ENCODE measurements at regions of chr17 and their contacts with region 1.

Region 1: GRCh38 chr17:50478391-50479381 is at the start of gene RSAD1:
- DNase-seq: peak; percentile 86 to 95 (median 92)
- ATAC-seq: peak; percentile 80 to 85 (median 84)
- H3K4me3 ChIP-seq: peak within 1 kb of the TSS; percentile 58 to 91 (median 66)
- H3K27ac ChIP-seq: peak within 1 kb of the TSS; percentile 80 to 88 (median 84)
- H3K4me1 ChIP-seq: peaks cover 9 to 25% (median 16%) of the 10 kb centered on the region in 3 donors
- H3K27me3 ChIP-seq: no peaks in the 10 kb centered on the region
- CTCF ChIP-seq: peak; percentile 87 to 94 (median 91)
- total RNA-seq, gene RSAD1: 20.1 to 35.7 (median 30.1) TPM

Region 2: DNA sequence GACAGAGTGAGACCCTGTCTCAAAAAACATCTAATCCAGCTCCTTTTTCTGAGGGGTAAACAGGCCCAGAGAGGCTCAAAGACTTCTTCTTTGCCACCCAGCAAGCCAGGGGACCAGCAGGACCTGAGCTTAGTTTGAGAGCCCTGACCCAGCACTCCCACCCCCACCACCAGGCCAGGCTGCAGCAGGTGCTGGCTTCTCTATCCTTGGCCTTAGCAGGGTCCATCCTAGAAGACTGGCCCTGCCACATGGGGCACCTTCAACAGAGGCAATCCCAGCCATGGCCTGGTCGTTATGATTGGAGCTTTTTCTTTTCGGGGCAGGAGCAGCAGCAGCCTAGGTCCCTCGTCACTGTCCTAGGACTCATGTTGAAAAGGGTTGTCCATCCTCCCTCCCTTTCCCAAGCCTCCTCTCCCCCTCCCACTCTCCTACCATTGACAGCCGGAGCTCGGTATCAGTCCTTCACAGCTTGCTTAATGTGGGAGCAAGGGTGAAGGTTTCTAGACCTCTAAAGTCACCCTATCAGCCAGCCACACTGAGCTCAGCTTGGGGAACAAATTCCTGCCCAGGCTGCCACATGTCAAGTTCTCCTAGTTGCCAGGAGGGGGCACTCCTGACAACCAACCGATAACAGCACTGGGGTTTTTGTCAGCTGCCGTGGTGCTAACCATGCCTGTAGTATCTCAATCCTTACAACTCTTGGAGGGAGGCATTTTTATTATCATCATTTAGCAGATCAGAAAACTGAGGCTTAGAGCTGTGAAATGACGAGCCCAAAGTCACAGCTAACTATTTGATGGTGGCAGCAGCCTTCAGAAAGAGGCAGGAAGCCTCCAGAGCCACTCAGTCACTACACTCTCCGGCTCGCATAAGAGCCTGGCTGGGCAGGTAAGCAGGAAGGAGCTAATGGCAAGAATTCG is 116.9 kb before region 1 on chr17:
- intact Hi-C with region 1: loop called in 2 of 3 experiments (anchors 5 to 10 kb)
- DNase-seq: peak in 3 of 6 donors; percentile 52 to 71 (median 57)
- ATAC-seq: peak; percentile 82 to 92 (median 89)
- H3K4me3 ChIP-seq: no peak overlapping the region
- H3K27ac ChIP-seq: peak overlapping the region in 1 of 4 donors; percentile 15
- H3K4me1 ChIP-seq: peaks cover 0 to 7% (median 0%) of the 10 kb centered on the region in 3 donors
- H3K27me3 ChIP-seq: no peaks in the 10 kb centered on the region
- CTCF ChIP-seq: peak; percentile 61 to 72 (median 66)

Region 3: GRCh38 chr17:50397111-50397918 is 81.4 kb before region 1 on chr17 and contains the start of gene LRRC59:
- intact Hi-C with region 1: no loop called
- DNase-seq: peak; percentile 83 to 98 (median 92)
- ATAC-seq: peak; percentile 78 to 97 (median 90)
- H3K4me3 ChIP-seq: peak within 1 kb of the TSS; percentile 40 to 94 (median 81)
- H3K27ac ChIP-seq: peak within 1 kb of the TSS; percentile 81 to 97 (median 94)
- H3K4me1 ChIP-seq: peaks cover 9 to 16% (median 13%) of the 10 kb centered on the region in 3 donors
- H3K27me3 ChIP-seq: no peaks in the 10 kb centered on the region
- CTCF ChIP-seq: peak; percentile 97 to 99 (median 98)
- total RNA-seq, gene LRRC59: 66.7 to 114 (median 74.2) TPM

Region 4: GRCh38 chr17:50539762-50540559 is 61.3 kb after region 1 on chr17:
- intact Hi-C with region 1: loop called in 2 of 3 experiments (anchors 5 to 10 kb)
- DNase-seq: peak in 4 of 6 donors; percentile 22 to 79 (median 51)
- ATAC-seq: no peak
- H3K4me3 ChIP-seq: no peak overlapping the region
- H3K27ac ChIP-seq: no peak overlapping the region
- H3K4me1 ChIP-seq: peaks cover 18 to 34% (median 24%) of the 10 kb centered on the region in 3 donors
- H3K27me3 ChIP-seq: no peaks in the 10 kb centered on the region
- CTCF ChIP-seq: no peak

Region 5: GRCh38 chr17:50575581-50576210 is 97.0 kb after region 1 on chr17:
- intact Hi-C with region 1: no loop called
- DNase-seq: no peak
- ATAC-seq: peak in 2 of 4 donors; percentile 22 to 33
- H3K4me3 ChIP-seq: no peak overlapping the region
- H3K27ac ChIP-seq: no peak overlapping the region
- H3K4me1 ChIP-seq: no peaks in the 10 kb centered on the region
- H3K27me3 ChIP-seq: no peaks in the 10 kb centered on the region
- CTCF ChIP-seq: no peak

Region 6: DNA sequence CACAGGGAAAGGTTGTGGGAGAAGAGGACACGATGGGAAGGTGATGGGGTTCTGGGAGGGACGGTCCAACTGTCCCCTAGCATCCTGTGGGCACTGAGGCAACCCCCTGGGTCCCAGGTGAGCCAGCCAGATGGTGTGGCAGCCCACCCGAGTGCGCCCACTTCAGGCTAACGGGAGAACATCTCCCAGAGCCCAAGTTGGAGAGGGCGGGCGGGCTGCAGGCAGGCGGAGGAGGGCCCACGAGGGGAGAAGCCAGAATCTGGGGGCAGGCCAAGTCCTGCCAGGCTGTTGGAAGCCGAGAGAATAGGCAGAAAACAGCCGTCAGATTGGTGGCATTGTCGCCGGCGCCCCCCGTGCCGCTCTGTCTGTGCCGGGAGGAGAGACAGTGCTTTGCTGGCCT is 142.2 kb after region 1 on chr17:
- intact Hi-C with region 1: loop called in 2 of 3 experiments (anchors 5 to 10 kb)
- DNase-seq: no peak
- ATAC-seq: no peak
- H3K4me3 ChIP-seq: no peak overlapping the region
- H3K27ac ChIP-seq: no peak overlapping the region
- H3K4me1 ChIP-seq: no peaks in the 10 kb centered on the region
- H3K27me3 ChIP-seq: no peaks in the 10 kb centered on the region
- CTCF ChIP-seq: no peak

Region 7: DNA sequence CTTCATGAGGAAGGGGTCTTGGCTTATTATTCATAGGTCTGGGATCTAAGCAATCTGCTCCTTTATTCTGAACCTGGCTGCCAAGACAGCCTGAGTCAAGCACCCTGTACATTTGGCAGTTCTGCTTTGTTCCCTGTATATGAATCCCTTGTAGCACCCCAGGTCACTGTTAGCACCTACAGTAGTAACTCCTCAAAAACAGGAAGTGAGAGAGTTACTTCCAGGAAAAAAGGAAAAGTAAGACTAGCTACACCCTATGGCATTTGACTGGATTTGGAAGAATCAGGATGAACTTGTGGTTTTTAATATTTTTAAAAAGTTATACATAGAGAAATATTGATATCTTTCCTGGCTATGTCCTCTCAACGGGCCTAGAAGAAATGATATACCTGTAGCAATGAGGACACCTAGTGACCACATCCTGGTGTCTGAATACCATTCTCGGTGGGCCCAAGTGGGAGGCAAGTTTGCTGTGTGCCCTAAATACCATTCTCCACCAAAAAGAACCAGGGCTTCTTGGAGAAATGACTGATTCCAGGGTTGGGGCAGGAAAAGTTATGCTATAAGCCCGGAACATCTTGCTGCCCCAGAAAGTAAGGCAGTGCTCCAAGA is 219.1 kb after region 1 on chr17:
- intact Hi-C with region 1: loop called in 1 of 3 experiments (anchors 5 kb)
- DNase-seq: no peak
- ATAC-seq: no peak
- H3K4me3 ChIP-seq: no peak overlapping the region
- H3K27ac ChIP-seq: peak overlapping the region in 3 of 4 donors; percentile 30 to 90 (median 70)
- H3K4me1 ChIP-seq: peaks cover 23 to 32% (median 31%) of the 10 kb centered on the region in 3 donors
- H3K27me3 ChIP-seq: no peaks in the 10 kb centered on the region
- CTCF ChIP-seq: no peak

Region 8: DNA sequence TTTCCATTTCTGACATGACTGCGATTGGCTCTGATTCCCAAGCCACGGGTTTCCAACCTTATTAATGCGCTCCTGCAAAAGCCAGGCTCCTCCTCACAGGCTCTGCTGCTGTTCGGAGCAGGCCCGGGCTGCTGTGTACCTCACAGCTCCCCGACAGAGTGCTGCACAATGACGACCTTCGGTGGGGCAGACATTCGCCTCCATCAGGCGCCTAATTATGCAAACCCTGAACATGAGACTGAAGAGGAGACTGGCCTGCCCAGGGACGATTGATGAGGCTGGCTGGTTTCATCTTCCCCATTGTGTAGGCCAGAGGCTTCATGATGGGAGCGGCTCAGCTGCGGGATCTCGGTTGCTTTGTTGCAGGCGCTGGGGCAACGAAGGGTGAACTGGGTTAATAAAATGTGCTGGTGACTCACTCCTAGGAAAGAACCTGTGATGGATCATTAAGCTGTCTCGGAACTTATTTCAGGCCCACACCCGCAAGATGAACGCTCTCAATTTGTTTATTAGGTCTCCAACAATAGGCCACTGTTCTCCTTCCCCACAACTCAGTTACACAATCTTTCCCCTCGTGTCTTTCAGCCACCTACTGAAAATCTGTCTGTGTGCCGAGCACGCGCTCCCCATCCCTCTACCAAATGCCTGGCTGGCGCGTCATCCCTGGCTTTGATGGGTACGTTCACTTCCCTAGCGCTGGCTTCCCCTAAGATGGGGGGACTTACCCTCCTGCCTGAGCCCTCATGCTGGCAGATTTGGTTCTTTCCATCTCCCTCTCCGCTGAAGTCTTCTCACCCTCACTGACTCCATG is 414.7 kb after region 1 on chr17:
- intact Hi-C with region 1: no loop called
- DNase-seq: peak in 3 of 6 donors; percentile 57 to 62 (median 59)
- ATAC-seq: peak; percentile 61 to 78 (median 74)
- H3K4me3 ChIP-seq: peak overlapping the region in 2 of 4 donors; percentile 17 to 21
- H3K27ac ChIP-seq: peak overlapping the region; percentile 70 to 85 (median 76)
- H3K4me1 ChIP-seq: peaks cover 0 to 18% (median 18%) of the 10 kb centered on the region in 3 donors
- H3K27me3 ChIP-seq: no peaks in the 10 kb centered on the region
- CTCF ChIP-seq: no peak

Measured in pancreas (tissue), 10 donors.